IMR-90 (cell line): ENCODE measurements at regions of chr20 and their contacts with region 1.

Region 1: DNA sequence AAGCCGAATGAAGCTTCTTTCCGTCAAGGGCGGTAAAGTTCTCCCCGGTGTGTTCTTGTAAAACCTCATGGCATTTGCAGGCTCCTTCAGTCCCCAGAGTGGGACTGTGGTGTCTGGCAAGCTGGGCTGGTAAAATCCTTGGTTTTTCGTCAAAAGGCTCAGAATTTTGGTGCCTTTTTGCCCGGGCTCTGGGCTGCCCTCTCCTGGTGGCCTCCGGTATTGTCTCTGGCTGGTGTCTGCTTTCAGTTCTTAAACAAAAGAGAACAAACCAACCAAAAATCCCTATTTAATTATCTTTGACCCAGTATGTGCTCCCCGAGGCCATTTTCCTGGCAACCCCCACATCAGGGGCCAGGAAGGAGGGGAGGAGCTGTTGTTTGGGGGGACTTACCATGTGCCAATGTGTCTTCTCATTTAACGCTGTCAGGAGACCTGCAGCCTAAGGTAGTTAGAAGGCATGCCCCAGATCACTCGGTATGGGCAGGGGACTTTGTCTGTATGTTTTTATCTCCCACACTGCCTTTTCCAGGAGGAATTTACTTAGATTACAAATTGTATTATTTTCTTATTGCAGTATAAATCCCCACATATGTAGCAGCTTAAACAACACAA is 11.1 kb downstream of the CDH4 start:
- DNase-seq: peak; percentile 17
- ATAC-seq: peak; percentile 78
- H3K4me3 ChIP-seq: no peak overlapping the region
- H3K27ac ChIP-seq: no peak overlapping the region
- H3K4me1 ChIP-seq: no peaks in the 10 kb centered on the region
- H3K27me3 ChIP-seq: no peaks in the 10 kb centered on the region; the same call in 1 of the 2 replicates
- CTCF ChIP-seq: peak; percentile 83
- POLR2A ChIP-seq: no peak
- RAD21 ChIP-seq: peak; percentile 62

Region 2: DNA sequence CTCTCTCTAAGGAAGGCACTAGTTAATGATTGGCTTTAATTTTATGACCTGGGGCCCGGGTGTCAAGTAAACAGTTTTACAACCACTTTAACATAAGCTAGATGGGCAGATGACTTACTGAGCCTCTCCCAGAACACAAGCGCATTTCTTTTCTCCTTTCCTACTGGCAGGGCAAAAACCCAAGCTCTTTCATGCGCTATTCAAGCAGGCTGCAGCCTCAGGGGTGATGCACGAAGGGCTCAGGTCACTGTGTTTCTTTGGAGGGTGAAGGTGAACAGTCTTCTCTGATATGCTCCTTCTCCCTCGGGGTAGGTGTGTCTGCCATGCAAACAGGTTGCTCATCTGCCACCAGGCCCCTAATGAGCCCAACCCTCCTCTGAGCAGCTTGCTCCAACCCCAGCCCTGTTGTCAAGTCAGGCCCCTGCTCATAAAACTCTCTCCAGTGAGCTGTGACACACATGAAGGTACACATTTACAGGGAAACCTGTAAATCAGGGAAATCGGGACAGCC is 84.6 kb before region 1 on chr20:
- CTCF ChIA-PET with region 1: no interaction called
- POLR2A ChIA-PET with region 1: no interaction called
- dilution Hi-C with region 1: no loop called
- in situ Hi-C with region 1: no loop called
- intact Hi-C with region 1: no loop called
- DNase-seq: no peak
- ATAC-seq: no peak
- H3K4me3 ChIP-seq: no peak overlapping the region
- H3K27ac ChIP-seq: no peak overlapping the region
- H3K4me1 ChIP-seq: peaks cover 8% of the 10 kb centered on the region
- H3K27me3 ChIP-seq: no peaks in the 10 kb centered on the region; the same call in 1 of the 2 replicates
- CTCF ChIP-seq: no peak
- POLR2A ChIP-seq: no peak
- RAD21 ChIP-seq: no peak

Region 3: GRCh38 chr20:61588411-61589386 is 325.5 kb after region 1 on chr20:
- CTCF ChIA-PET with region 1: no interaction called
- POLR2A ChIA-PET with region 1: no interaction called
- dilution Hi-C with region 1: no loop called
- in situ Hi-C with region 1: no loop called
- intact Hi-C with region 1: no loop called
- DNase-seq: peak; percentile 90
- ATAC-seq: peak; percentile 77
- H3K4me3 ChIP-seq: peak overlapping the region; percentile 12; the same call in 1 of the 2 replicates
- H3K27ac ChIP-seq: peak overlapping the region; percentile 69
- H3K4me1 ChIP-seq: peaks cover 10% of the 10 kb centered on the region
- H3K27me3 ChIP-seq: no peaks in the 10 kb centered on the region; the same call in 1 of the 2 replicates
- CTCF ChIP-seq: no peak
- POLR2A ChIP-seq: no peak
- RAD21 ChIP-seq: no peak

Region 4: GRCh38 chr20:61874501-61875026 is 611.4 kb after region 1 on chr20:
- CTCF ChIA-PET with region 1: no interaction called
- POLR2A ChIA-PET with region 1: no interaction called
- dilution Hi-C with region 1: no loop called
- in situ Hi-C with region 1: loop called (anchors 25 kb)
- intact Hi-C with region 1: loop called (anchors 2 kb)
- DNase-seq: peak; percentile 18
- ATAC-seq: peak; percentile 54
- H3K4me3 ChIP-seq: no peak overlapping the region
- H3K27ac ChIP-seq: no peak overlapping the region
- H3K4me1 ChIP-seq: no peaks in the 10 kb centered on the region
- H3K27me3 ChIP-seq: no peaks in the 10 kb centered on the region; the same call in 1 of the 2 replicates
- CTCF ChIP-seq: peak; percentile 43
- POLR2A ChIP-seq: no peak
- RAD21 ChIP-seq: peak; percentile 58

Region 5: GRCh38 chr20:61896058-61896961 is 633.1 kb after region 1 on chr20:
- CTCF ChIA-PET with region 1: no interaction called
- POLR2A ChIA-PET with region 1: no interaction called
- dilution Hi-C with region 1: no loop called
- in situ Hi-C with region 1: loop called (anchors 25 kb)
- intact Hi-C with region 1: loop called (anchors 5 kb)
- DNase-seq: peak; percentile 28
- ATAC-seq: peak; percentile 98
- H3K4me3 ChIP-seq: no peak overlapping the region
- H3K27ac ChIP-seq: no peak overlapping the region
- H3K4me1 ChIP-seq: no peaks in the 10 kb centered on the region
- H3K27me3 ChIP-seq: peaks cover 3% of the 10 kb centered on the region; the same call in 1 of the 2 replicates
- CTCF ChIP-seq: peak; percentile 79
- POLR2A ChIP-seq: no peak
- RAD21 ChIP-seq: peak; percentile 85

Region 6: DNA sequence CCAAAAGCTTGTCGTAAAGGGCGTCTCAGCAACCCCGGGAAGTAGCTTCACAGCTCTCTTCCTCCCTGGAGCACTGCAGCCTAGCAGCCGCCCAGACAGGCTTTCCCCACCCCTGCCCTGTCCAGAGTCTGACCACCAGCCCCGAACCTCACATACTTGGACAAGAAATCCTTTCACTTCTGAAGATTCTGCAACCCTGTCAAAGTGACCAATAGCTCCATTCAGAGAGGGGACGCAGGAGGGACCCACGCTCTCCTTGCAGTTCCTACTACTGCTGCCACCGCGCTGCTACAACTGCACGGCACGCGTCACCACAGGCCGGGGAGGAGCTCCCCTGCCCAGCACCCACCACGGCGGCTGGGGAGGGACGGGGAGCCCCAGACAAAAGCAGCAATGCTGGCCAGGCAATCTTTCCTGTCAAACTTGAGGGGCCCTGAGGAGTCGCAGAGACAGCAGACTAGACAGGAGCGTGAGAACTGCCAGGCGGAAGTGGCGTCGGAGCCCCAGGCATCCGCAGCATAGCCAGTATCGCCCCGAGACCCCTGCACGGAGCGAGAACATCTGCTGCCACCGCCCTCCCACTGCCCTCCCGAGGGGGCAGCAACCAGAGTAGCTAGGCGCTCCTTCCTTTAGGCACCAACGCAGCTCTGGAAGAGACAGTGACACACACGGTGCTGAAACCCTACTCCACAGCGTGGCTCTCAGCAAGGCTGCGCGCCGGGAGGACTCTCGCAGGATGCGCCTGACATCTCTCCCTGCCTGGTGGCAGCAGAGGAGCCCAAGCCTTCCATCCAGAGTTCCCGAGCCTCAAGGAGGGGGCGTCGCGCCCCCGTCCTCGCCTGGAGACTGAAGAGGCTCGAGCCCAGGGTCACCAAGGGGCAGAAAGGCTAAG is 800.1 kb after region 1 on chr20:
- CTCF ChIA-PET with region 1: no interaction called
- POLR2A ChIA-PET with region 1: no interaction called
- dilution Hi-C with region 1: no loop called
- in situ Hi-C with region 1: no loop called
- intact Hi-C with region 1: no loop called
- DNase-seq: peak; percentile 62
- ATAC-seq: 0 out of 2 replicates have a peak, but pooled peaks have one; percentile 6
- H3K4me3 ChIP-seq: peak overlapping the region; percentile 35; the same call in 1 of the 2 replicates
- H3K27ac ChIP-seq: no peak overlapping the region
- H3K4me1 ChIP-seq: peaks cover 16% of the 10 kb centered on the region
- H3K27me3 ChIP-seq: no peaks in the 10 kb centered on the region
- CTCF ChIP-seq: no peak
- POLR2A ChIP-seq: no peak
- RAD21 ChIP-seq: no peak